Right cardiac atrium (tissue), 5 donors: ENCODE measurements at regions of chr6 and their contacts with region 1.

Region 1: DNA sequence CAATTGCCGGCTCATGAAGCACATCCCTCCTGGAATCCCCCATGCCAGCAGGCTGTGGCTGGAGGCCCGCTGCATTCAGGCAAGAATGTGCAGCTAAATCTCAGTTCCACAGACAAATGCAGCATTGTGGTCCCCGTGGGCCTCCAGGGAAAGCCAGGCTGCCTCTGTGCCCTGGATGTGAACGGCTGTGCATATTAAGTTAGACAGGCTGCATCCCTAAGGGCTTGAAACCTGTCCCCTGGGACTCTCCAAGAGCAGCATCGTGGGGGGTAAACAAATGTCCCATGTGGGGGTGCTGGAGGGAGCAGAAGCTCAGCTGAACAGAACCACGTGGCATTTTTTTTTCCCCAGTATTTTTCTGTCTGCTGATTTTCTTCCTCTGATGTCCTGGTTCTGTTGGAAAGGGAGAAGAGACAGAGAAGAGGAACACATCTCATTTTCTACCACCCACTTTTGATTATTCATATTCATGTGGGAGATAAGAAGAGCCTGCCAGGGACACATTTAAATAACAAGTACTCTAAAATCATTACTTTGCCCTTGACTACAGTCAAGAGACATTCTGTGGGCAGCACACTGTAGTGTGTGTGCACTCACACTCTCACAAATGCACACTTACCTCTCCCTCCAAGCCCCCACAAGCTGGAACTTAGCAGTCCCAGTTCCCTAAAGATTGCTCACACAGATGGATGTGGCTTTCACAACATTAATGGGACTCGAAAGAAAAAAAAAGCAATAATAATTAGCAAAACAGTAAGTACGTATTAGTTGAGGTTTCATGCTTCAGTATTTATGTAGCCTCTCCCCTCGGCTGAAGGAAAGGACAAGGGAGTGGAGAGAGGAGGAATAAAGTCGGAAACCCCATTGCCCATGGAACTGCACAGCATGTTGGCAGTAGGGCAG is 16.9 kb downstream of the GFOD1 start:
- DNase-seq: no peak
- ATAC-seq: peak; percentile 63 to 72
- H3K4me3 ChIP-seq: no peak overlapping the region
- H3K27ac ChIP-seq: peak overlapping the region; percentile 88
- H3K4me1 ChIP-seq: peaks cover 17% of the 10 kb centered on the region
- H3K27me3 ChIP-seq: no peaks in the 10 kb centered on the region

Region 2: DNA sequence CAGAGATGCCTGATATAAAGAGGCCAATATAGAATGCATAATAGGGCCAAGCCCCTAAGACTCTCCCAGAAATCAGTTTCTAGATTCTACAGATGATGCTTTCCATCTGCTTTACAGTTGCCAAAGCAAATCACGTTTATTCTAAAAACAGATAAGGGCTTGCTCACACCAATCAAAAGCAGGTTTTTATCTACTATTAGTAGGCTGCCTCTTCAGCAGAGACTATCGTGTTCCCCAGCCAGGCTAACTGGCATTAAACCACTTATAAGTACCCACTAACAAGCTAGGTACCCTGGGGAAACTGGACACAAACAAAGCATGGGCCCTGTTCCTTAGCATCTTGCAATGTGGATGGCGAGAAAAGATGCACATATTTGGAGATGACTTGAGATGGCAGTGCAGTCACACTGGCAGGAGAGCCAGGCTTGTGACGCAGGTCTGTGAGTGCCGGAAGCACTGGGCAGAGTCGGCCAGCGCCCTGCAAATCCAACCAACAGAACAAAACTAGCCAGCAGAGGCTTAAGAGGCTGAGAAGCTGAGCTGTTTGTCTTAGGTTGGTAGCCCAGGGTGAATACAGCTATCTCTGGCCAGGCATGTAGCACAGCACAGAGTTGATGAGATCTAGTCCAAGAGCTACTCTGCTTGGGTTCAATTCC is 56.5 kb before region 1 on chr6:
- intact Hi-C with region 1: loop called in 1 of 4 experiments (anchors 10 kb)
- DNase-seq: peak; percentile 62 to 83 (median 71)
- ATAC-seq: peak; percentile 77 to 82
- H3K4me3 ChIP-seq: no peak overlapping the region
- H3K27ac ChIP-seq: peak overlapping the region; percentile 90
- H3K4me1 ChIP-seq: peaks cover 26% of the 10 kb centered on the region
- H3K27me3 ChIP-seq: no peaks in the 10 kb centered on the region

Region 3: GRCh38 chr6:13427801-13428582 is 42.5 kb before region 1 on chr6:
- intact Hi-C with region 1: loop called in 1 of 4 experiments (anchors 10 kb)
- DNase-seq: peak; percentile 52 to 76 (median 67)
- ATAC-seq: peak; percentile 54 to 81
- H3K4me3 ChIP-seq: no peak overlapping the region
- H3K27ac ChIP-seq: peak overlapping the region; percentile 69
- H3K4me1 ChIP-seq: peaks cover 36% of the 10 kb centered on the region
- H3K27me3 ChIP-seq: no peaks in the 10 kb centered on the region